Heart right ventricle (tissue), 16 donors: ENCODE measurements at regions of chr9 and their contacts with region 1.

Region 1: DNA sequence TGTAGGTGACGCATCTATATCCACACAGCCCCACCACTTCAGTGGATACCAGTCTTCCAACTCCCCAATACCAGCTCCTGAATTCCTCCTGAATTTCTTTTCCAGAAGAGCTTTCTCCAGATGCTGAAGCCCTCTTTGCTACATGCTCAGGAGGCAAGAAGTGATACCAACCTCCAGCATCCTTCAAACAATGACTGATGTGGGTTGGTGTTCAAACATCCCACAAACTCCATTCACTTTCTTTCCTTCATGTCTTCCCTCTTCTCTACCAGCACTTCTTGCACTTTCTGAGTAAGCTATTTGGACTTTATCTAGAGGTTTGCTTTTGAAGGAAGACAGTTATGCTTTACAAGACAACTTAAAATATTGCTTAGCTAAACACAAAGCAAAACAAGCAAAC is 179.9 kb upstream of the RORB start:
- DNase-seq: no peak
- ATAC-seq: no peak
- H3K4me3 ChIP-seq: no peak overlapping the region
- H3K27ac ChIP-seq: no peak overlapping the region
- H3K4me1 ChIP-seq: no peaks in the 10 kb centered on the region
- H3K27me3 ChIP-seq: no peaks in the 10 kb centered on the region
- CTCF ChIP-seq: no peak

Region 2: GRCh38 chr9:72675586-72675985 is 1641.6 kb before region 1 on chr9:
- intact Hi-C with region 1: no loop called
- DNase-seq: no peak
- ATAC-seq: no peak
- H3K4me3 ChIP-seq: no peak overlapping the region
- H3K27ac ChIP-seq: no peak overlapping the region
- H3K4me1 ChIP-seq: no peaks in the 10 kb centered on the region
- H3K27me3 ChIP-seq: no peaks in the 10 kb centered on the region
- CTCF ChIP-seq: no peak

Region 3: DNA sequence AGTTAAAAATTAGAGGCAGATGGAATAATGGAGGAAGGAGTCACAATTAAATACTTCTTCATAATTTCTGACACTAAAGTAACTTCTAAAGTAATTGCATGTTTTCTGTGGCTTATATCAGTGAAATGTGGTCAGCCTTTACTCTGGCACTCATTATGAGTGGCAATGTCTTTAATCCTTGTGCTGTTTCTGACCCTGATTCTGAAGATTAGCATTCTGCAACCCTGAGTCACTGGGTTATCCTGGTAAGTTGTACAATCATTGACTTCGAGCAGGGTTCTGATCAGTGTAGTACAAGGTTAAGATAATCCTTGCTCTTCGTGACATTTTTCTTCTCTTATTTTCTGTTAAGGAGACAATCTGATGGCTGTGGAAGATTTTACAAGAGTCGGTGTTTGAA is 199.5 kb before region 1 on chr9:
- intact Hi-C with region 1: loop called in 1 of 10 experiments (anchors 5 kb)
- DNase-seq: no peak
- ATAC-seq: no peak
- H3K4me3 ChIP-seq: no peak overlapping the region
- H3K27ac ChIP-seq: no peak overlapping the region
- H3K4me1 ChIP-seq: no peaks in the 10 kb centered on the region
- H3K27me3 ChIP-seq: no peaks in the 10 kb centered on the region
- CTCF ChIP-seq: no peak